A549 (cell line): ENCODE measurements at regions of chr3 and their contacts with region 1.

Region 1: GRCh38 chr3:172341482-172342059 is 106.7 kb downstream of the GHSR start:
- DNase-seq: peak; percentile 13 to 60
- ATAC-seq: peak; percentile 76 to 82
- H3K4me3 ChIP-seq: no peak overlapping the region
- H3K27ac ChIP-seq: peak overlapping the region in 1 of 2 experiments; percentile 53; a peak in 1 of 6 replicates
- H3K4me1 ChIP-seq: peaks cover 5% of the 10 kb centered on the region; the same call in 1 of the 3 replicates
- CTCF ChIP-seq: peak; percentile 62
- EP300 ChIP-seq: no peak
- POLR2A ChIP-seq: no peak
- RAD21 ChIP-seq: peak; percentile 64 to 65

Region 2: DNA sequence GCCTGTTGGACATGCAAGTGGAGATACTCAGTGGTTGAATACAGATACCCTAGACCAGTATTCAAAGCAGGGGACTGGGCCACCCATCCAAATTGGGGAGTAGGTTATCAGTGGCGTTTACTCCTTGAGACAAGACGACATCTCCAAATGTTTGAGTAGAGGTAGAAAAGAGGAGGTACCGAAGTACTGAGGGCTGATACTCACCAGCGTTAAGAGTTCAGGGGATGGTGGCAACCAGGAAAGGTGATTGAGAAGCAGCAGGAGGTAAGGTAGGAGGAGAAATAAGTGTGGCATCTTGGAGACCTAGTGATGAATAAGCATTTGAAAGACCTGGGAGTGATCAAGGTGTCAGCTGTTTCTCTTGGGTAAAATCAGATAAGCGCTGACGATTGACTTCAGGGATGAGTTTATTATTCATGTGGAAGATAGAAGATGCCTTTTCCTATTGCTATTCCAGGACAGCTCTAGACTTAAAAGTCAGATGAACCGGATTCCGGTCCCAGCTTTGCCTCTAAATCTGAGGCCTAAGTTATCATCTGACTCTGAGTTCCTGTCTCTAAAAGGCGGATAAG is 10.4 kb after region 1 on chr3:
- CTCF ChIA-PET with region 1: interaction called, 13 read pairs
- POLR2A ChIA-PET with region 1: no interaction called
- DNase-seq: no peak
- ATAC-seq: no peak
- H3K4me3 ChIP-seq: no peak overlapping the region
- H3K27ac ChIP-seq: no peak overlapping the region
- H3K4me1 ChIP-seq: peaks cover 37% of the 10 kb centered on the region
- CTCF ChIP-seq: no peak
- EP300 ChIP-seq: no peak
- POLR2A ChIP-seq: no peak
- RAD21 ChIP-seq: no peak